ENCODE measurements at regions of chr12 and their contacts with region 1.

Region 1: DNA sequence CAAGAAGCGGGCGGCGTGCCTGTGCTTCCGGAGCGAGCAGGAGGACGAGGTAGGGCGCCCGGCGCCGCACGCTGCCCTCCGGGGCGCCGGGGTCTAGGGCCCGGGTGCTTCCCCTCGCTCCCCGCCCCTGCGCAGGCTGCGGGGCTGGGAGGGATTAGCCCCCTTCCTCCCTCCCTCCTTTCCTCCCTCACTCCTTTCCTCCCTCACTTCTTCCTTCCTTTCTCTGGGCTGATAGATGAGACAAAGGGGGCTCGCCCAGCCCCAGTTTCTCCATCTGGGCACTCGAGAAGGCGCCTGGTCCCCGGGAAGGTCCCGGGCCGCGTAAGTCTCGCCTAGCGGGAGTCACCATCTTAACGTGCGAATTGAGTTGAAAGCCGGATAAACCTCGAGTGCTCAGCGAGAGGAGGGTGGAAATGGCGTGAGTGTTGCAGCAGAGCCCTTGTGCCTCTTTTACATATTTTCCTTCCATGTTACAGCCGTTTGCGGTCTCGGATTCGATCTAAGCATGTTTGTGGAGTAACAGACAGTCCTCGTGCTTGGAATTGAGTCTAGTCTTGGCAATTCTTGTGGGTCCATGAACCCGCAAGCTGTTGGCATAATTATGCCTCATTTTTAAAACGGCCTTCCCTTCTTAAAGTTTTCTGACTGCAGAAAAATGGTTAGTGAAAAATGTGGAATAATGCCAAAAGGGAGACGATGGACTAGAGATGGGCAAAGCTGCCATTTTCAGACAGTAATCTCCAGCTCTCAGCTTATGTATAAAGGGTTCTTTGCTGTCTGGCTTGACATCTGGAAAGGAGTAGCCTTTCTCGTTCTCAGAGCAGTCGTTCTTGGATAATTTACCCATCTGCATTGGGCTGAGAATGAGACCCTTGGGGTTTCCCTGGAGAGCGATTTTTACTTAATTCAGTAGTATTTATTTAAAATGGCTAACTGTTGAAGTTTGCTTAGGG is 924 bp downstream of the NUDT4 start:
- DNase-seq: peak; percentile 66
- H3K4me3 ChIP-seq: peak overlapping the region; percentile 67 to 93 (median 87)
- H3K27ac ChIP-seq: peak overlapping the region; percentile 77
- H3K4me1 ChIP-seq: peaks cover 25% of the 10 kb centered on the region
- H3K27me3 ChIP-seq: no peaks in the 10 kb centered on the region
- CTCF ChIP-seq: no peak

Region 2: DNA sequence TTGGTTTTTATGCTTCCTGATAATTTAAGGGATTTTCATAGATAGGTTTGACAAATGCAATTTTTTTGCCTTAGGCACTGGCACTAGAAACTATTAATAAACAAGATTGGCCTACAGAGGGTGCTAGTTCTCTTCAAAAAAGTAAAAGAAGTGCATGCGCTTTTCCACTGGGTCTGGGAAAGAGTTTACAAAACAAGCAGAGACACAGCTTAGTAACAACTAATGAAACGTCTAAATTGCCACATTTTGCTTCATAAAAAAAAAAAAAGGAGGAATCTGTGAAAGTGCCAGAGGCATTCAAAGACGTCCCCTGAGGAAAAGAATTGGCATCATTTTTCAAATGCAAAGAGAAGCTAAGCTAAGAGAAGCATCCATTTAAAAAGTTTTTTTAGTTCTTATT is 391.3 kb before region 1 on chr12:
- CTCF ChIA-PET with region 1: interaction called, 5 read pairs
- dilution Hi-C with region 1: loop called (anchors 10 kb)
- in situ Hi-C with region 1: no loop called
- intact Hi-C with region 1: loop called (anchors 1 kb)
- DNase-seq: peak; percentile 58
- H3K4me3 ChIP-seq: no peak overlapping the region
- H3K27ac ChIP-seq: no peak overlapping the region
- H3K4me1 ChIP-seq: peaks cover 5% of the 10 kb centered on the region
- H3K27me3 ChIP-seq: no peaks in the 10 kb centered on the region
- CTCF ChIP-seq: peak; percentile 45 to 53

Region 3: DNA sequence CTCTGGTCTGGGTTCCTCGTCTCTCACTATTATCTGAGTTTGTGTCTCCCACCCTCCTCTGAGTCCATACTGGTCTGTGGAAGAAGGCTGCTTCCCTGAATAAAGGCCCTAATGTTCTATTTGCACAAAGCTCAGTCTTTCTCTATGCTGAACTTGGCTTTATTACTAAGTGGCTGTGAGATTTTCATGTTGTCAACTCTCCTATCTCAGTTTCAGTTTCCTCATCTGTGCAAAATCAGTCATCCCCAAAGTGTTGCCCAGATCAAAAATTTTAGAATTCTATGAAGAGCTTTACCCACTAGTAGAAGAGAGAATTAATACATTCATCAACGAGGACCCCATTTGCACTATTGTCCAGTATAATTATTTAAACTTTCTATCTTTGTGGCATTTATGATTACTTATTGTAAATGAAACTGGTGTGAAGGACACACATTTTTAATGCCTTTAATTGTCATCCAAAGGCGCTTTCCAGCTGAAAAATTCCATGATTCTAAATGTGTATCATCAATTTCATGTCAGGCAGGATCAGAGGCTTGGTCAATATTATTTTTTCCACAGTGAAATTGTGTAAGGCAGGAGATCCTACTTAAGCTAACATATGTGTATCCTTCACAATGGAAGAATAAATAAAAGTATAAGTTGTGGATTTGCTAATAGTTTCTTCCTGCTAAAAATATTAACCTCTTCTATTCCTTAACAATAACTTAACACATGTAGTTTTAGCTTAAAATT is 370.4 kb before region 1 on chr12:
- CTCF ChIA-PET with region 1: no interaction called
- dilution Hi-C with region 1: no loop called
- in situ Hi-C with region 1: no loop called
- intact Hi-C with region 1: no loop called
- DNase-seq: no peak
- H3K4me3 ChIP-seq: no peak overlapping the region
- H3K27ac ChIP-seq: no peak overlapping the region
- H3K4me1 ChIP-seq: no peaks in the 10 kb centered on the region
- H3K27me3 ChIP-seq: no peaks in the 10 kb centered on the region
- CTCF ChIP-seq: no peak

Region 4: DNA sequence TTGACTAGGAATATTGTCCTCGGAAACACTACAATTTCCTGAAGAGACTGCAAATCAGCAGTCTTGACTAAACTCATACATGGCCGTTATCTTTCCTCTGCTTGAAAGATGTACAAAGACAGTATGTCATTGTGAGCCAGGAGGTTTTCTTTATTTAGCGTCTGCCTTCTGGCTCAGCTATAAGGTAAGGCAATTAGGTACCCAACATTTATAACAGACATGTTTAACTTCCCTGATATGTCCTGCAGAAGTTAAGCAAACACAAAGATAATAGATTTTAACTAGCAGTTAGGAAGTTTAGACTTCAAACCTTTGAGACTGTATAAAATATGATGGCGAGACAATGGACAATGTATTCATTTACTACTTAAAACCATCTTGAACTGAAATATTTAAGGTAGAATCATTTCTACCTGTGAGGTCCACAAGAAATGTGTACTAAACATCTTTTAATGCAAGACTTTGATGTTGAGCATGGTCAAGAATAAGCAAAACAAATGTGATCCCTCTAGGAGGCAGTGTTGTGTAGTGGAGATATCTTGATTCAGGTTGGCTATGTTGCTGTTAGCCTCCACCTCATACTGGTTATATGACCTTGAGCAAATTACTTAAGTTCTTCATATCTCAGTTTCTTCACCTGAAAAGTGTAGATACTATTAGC is 353.4 kb before region 1 on chr12:
- CTCF ChIA-PET with region 1: interaction called, 5 read pairs
- dilution Hi-C with region 1: no loop called
- in situ Hi-C with region 1: loop called (anchors 10 kb)
- intact Hi-C with region 1: loop called (anchors 1 kb)
- DNase-seq: peak; percentile 58
- H3K4me3 ChIP-seq: no peak overlapping the region
- H3K27ac ChIP-seq: no peak overlapping the region
- H3K4me1 ChIP-seq: no peaks in the 10 kb centered on the region
- H3K27me3 ChIP-seq: no peaks in the 10 kb centered on the region
- CTCF ChIP-seq: peak; percentile 60 to 79

Region 5: DNA sequence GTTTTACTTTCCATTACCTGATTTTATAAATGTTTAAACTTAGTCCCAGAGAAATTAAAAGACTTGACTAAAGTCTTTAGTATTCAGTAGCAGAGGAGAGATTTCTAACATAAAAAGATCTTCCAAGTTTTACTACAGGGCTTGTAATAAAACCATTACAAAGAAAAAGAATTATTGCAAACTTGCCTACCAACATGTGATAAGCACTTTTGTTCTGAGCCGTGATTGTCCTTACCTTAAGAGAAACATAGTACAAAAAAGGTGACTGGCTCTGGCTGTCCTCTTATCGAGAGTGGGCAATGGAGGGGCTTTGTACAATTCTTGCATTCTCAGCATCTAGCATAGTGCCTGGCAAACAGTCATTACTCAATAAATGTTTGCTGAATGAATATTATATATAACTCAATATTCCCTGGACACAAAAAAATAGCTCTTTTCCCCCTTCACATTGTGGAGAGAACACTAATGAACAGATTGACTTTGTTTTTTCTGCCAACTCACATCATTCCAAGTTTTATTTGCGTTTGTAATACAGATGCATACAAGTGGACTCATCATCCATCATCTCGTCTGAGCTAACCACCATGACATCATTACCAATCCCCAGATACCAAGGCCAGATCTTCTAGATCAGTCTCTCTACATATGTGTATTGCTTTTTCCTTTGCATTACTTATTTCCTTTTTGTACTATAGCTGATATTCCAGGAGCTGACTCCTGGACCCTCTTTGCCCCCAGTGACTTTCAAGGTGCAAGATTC is 256.7 kb before region 1 on chr12:
- CTCF ChIA-PET with region 1: no interaction called
- dilution Hi-C with region 1: no loop called
- in situ Hi-C with region 1: loop called in 1 of 2 experiments (anchors 10 kb)
- intact Hi-C with region 1: loop called (anchors 1 kb)
- DNase-seq: peak; percentile 95
- H3K4me3 ChIP-seq: peak overlapping the region in 2 of 3 experiments; percentile 12 to 21
- H3K27ac ChIP-seq: peak overlapping the region; percentile 95
- H3K4me1 ChIP-seq: peaks cover 28% of the 10 kb centered on the region
- H3K27me3 ChIP-seq: no peaks in the 10 kb centered on the region
- CTCF ChIP-seq: no peak

Region 6: GRCh38 chr12:93229494-93230325 is 148.9 kb before region 1 on chr12:
- CTCF ChIA-PET with region 1: no interaction called
- dilution Hi-C with region 1: loop called (anchors 10 kb)
- in situ Hi-C with region 1: no loop called
- intact Hi-C with region 1: loop called (anchors 5 kb)
- DNase-seq: peak; percentile 87
- H3K4me3 ChIP-seq: no peak overlapping the region
- H3K27ac ChIP-seq: peak overlapping the region; percentile 61
- H3K4me1 ChIP-seq: peaks cover 22% of the 10 kb centered on the region
- H3K27me3 ChIP-seq: no peaks in the 10 kb centered on the region
- CTCF ChIP-seq: no peak

Region 7: GRCh38 chr12:93322784-93323183 is 55.9 kb before region 1 on chr12:
- CTCF ChIA-PET with region 1: interaction called, 3 read pairs
- dilution Hi-C with region 1: no loop called
- in situ Hi-C with region 1: no loop called
- intact Hi-C with region 1: loop called (anchors 2 kb)
- DNase-seq: peak; percentile 67
- H3K4me3 ChIP-seq: no peak overlapping the region
- H3K27ac ChIP-seq: no peak overlapping the region
- H3K4me1 ChIP-seq: peaks cover 18% of the 10 kb centered on the region
- H3K27me3 ChIP-seq: no peaks in the 10 kb centered on the region
- CTCF ChIP-seq: no peak